Esophagus muscularis mucosa (tissue), 4 donors: ENCODE measurements at regions of chr2 and their contacts with region 1.

Region 1: DNA sequence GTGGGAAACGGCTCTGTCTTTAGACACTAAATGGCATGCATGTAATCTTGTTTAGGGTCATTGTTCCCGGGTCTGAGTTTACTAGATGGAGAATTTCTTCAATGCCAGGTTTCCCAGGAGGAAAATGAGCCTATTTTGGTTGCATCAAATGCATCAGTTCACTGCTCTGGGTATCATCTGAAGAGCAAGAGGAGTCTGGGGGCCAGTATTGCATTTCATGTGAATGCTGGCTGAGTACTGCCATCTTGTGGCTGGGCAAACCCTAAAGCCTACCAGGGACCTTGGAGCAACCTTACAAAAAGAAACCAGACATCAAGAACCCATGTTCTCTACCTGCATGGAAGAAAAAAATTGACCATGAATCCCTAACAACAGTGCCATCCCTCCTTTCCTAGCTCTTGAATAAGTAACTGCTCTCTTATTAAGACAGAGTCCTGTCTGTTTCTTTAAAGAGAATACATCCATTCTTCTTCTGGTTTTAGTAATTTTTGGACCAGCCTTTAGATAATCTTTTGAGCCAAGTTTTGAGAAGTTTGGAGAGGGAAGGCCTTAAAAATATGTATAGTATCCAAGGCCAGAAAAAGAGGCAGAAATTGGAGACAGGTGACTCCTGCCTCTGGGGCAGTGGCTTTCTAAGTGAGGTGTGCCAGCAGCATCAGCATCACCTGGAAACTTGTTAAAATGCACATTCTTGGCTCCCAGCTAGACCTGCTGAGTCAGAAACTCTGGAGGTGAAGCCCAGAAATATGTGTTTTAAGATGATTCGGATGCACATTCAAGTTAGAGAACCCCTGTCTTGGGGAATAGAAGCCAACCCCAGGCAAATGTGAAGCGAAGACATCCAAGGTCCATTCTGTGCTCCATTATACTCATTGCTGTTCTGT is 261.0 kb upstream of the CXCR4 start:
- DNase-seq: peak; percentile 64
- H3K4me3 ChIP-seq: no peak overlapping the region
- H3K27ac ChIP-seq: no peak overlapping the region
- H3K4me1 ChIP-seq: no peaks in the 10 kb centered on the region
- H3K27me3 ChIP-seq: no peaks in the 10 kb centered on the region
- CTCF ChIP-seq: peak; percentile 58 to 69 (median 60)
- EP300 ChIP-seq: no peak
- POLR2A ChIP-seq: no peak

Region 2: DNA sequence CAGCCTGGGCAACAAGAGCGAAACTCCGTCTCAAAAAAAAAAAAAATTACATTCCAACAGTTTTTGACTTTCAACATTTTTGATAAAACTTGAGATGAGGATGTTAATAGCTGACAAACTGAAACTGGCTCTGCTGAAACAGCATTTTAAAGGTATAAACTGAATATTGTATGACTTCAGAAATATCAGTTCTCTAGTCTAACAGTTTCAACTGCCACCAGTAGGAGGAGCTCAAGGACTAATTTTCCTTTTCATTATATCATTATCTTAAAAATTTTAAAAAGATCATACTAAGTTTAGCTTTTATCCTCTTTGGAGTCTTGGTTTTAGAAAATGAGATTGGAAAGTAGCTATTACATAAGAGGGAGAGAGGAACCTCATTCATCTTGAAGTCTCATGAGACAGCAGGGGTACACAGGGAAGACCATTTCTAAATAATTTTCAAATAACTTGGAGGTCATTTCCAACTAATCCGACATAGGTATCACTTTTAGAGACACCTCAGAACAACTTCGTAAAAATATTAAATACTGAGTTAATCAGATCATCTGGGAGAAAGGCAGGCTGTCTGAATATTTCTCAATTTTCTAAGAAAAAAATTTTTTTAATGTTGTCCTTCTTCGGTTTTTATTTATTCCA is 465.1 kb before region 1 on chr2:
- intact Hi-C with region 1: loop called (anchors 2 kb)
- DNase-seq: no peak
- H3K4me3 ChIP-seq: no peak overlapping the region
- H3K27ac ChIP-seq: no peak overlapping the region
- H3K4me1 ChIP-seq: no peaks in the 10 kb centered on the region
- H3K27me3 ChIP-seq: no peaks in the 10 kb centered on the region
- CTCF ChIP-seq: peak; percentile 72 to 80 (median 73)
- EP300 ChIP-seq: no peak
- POLR2A ChIP-seq: no peak

Region 3: DNA sequence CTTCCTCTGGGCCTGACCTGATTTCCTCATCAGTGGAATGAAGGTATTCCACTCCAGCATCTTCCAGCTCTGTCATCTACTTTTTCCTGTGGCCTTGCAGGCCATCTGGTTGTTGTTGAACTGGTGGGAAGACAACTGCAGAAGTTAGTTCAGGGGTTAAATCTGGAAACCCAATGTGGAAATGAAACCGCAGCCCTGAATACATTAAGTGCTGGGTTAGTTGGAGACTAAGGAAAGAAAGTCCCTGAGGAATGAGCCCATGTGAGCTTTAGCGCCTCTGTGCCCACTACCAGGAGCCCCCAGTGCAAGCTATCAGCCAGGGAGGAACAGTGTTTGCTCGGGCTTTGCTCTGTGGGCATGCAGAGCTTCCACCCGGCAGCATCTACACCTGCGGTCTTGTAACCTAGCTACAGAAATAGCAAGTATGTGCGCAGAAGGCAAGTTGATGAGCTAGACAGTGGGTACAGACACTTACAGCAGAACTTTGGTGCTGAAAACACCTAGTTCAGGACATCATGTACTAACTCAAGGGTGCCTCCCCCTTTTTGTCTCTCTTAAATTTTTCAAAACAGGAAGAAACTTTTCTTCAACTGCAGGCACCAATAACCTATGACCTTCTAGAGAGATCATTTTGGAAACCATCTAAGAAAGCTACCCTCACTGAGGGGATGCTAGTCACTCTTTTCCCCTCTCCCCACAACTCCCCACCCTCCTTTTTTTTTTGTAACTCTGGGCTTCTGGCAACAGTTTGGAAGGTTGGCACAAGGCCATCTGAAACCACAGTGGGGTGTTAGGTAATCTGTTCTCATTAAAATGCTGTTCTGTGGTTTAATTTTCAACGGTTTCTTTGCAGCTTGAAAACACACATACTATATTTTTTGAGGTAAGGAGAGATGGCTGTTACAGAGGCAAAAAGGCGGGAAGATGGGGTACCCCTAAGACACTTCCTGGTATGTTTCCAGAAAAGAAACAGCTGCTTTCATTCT is 242.7 kb before region 1 on chr2:
- intact Hi-C with region 1: loop called (anchors 10 kb)
- DNase-seq: no peak
- H3K4me3 ChIP-seq: no peak overlapping the region
- H3K27ac ChIP-seq: peak overlapping the region in 1 of 4 donors; percentile 26
- H3K4me1 ChIP-seq: peaks cover 0 to 15% (median 6%) of the 10 kb centered on the region in 4 donors
- H3K27me3 ChIP-seq: no peaks in the 10 kb centered on the region
- CTCF ChIP-seq: no peak
- EP300 ChIP-seq: peak; percentile 54
- POLR2A ChIP-seq: no peak

Region 4: DNA sequence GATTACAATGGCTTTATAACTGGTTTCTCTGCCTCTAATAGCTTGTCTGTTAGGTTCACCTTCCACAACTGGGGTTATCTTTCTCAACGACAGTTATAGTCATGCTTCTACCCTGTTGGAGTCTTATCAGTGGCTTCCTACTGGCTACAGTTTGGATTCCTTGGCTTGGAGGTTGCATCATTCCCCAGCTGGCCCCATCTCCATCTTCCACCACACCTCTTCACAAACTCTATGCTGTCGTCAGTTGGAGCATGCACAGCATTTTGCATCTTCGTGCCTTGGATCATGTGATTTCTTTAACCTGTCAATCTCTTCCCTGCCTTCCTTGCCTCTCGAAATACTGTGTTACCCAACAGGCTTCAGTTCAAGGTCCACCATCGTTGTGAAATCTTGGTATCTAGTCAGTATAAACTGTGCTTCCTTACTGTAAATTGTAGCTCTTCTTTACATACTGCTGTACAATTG is 55.3 kb after region 1 on chr2:
- intact Hi-C with region 1: no loop called
- DNase-seq: peak; percentile 57
- H3K4me3 ChIP-seq: no peak overlapping the region
- H3K27ac ChIP-seq: no peak overlapping the region
- H3K4me1 ChIP-seq: no peaks in the 10 kb centered on the region
- H3K27me3 ChIP-seq: no peaks in the 10 kb centered on the region
- CTCF ChIP-seq: no peak
- EP300 ChIP-seq: no peak
- POLR2A ChIP-seq: no peak

Region 5: GRCh38 chr2:136448432-136448831 is 69.5 kb after region 1 on chr2:
- intact Hi-C with region 1: no loop called
- DNase-seq: peak; percentile 66
- H3K4me3 ChIP-seq: no peak overlapping the region
- H3K27ac ChIP-seq: no peak overlapping the region
- H3K4me1 ChIP-seq: no peaks in the 10 kb centered on the region
- H3K27me3 ChIP-seq: peaks cover 0 to 3% (median 0%) of the 10 kb centered on the region in 4 donors
- CTCF ChIP-seq: no peak
- EP300 ChIP-seq: no peak
- POLR2A ChIP-seq: no peak

Region 6: GRCh38 chr2:136486115-136486514 is 107.2 kb after region 1 on chr2:
- intact Hi-C with region 1: no loop called
- DNase-seq: no peak
- H3K4me3 ChIP-seq: no peak overlapping the region
- H3K27ac ChIP-seq: no peak overlapping the region
- H3K4me1 ChIP-seq: no peaks in the 10 kb centered on the region
- H3K27me3 ChIP-seq: no peaks in the 10 kb centered on the region
- CTCF ChIP-seq: no peak
- EP300 ChIP-seq: no peak
- POLR2A ChIP-seq: no peak